ENCODE measurements at regions of chr16 and their contacts with region 1.

Region 1: GRCh38 chr16:19886073-19886941 is 1.7 kb upstream of the GPRC5B start:
- DNase-seq: peak; percentile 88
- ATAC-seq: peak; percentile 68
- H3K4me3 ChIP-seq: peak overlapping the region in 1 of 2 experiments; percentile 78; a peak in 2 of 4 replicates
- H3K27ac ChIP-seq: peak overlapping the region; percentile 12; the same call in 1 of the 2 replicates
- H3K4me1 ChIP-seq: peaks cover 23% of the 10 kb centered on the region
- H3K27me3 ChIP-seq: no peaks in the 10 kb centered on the region
- CTCF ChIP-seq: peak; percentile 100

Region 2: DNA sequence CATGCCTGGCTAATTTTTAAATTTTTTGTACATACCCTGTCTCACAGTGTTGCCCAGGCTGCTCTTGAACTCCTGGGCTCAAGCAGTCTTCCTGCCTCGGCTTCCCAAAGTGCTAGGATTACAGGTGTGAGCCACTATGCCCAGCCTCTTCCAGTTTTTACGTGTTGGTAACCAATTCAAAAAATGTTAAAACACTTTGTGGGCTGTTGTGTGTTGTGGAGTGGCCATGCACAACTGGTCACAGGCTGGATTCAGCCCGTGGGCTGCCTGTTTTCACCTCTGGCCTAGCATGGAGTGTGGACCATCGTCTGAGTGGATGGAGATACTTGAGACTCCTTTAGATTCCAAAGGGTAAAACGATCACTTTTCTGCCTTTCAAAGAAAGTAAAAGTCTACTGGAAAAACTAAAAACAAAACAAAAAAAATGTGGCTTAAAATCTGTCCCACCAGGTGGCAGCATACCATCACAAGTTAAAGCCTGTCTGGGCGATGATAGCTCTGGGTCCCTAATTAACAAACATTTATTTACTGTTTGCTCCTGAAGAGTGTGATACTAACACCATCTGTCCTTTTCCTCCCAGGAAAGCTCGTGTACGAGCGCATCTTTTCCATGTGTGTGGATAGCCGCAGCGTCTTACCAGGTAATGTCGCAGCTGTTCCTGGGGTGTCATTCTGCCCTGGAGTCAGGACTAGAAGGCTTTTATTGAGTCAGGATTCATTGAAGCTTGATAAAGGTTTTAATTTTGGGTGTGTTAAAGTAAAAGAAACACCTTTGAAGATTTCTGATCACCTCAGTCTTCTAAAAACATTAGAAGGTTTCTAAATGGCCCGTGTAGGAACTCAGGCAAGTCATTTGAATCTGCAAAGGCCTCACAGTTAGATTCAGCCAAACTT is 285.0 kb before region 1 on chr16:
- CTCF ChIA-PET with region 1: interaction called, 6 read pairs
- POLR2A ChIA-PET with region 1: no interaction called
- in situ Hi-C with region 1: no loop called
- intact Hi-C with region 1: loop called (anchors 1 kb)
- DNase-seq: no peak
- ATAC-seq: peak; percentile 56; the same call in 1 of the 2 replicates
- H3K4me3 ChIP-seq: no peak overlapping the region
- H3K27ac ChIP-seq: no peak overlapping the region
- H3K4me1 ChIP-seq: no peaks in the 10 kb centered on the region
- H3K27me3 ChIP-seq: no peaks in the 10 kb centered on the region
- CTCF ChIP-seq: peak; percentile 85

Region 3: DNA sequence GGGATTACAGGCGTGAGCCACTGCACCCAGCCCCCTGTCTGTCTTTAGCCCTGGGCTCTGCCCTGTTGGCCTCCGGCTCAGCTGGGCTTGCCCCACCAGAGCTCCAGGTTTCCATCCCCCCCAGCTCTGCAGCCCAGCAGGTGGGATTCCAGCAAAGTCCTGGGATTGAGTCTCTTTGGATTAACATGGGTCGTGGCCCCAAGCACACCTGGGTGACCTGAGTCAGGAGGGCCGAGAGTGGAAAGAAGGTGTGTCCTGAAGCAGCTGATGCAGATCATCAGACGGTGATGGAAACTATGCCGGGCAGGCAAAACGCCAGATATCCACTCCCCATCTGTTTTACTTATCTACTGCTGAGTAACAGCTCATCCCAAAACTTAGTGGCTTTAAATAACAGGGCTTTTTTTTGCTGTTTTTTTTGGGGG is 240.7 kb before region 1 on chr16:
- CTCF ChIA-PET with region 1: no interaction called
- POLR2A ChIA-PET with region 1: no interaction called
- in situ Hi-C with region 1: loop called (anchors 25 kb)
- intact Hi-C with region 1: no loop called
- DNase-seq: no peak
- ATAC-seq: no peak
- H3K4me3 ChIP-seq: no peak overlapping the region
- H3K27ac ChIP-seq: no peak overlapping the region
- H3K4me1 ChIP-seq: no peaks in the 10 kb centered on the region
- H3K27me3 ChIP-seq: no peaks in the 10 kb centered on the region
- CTCF ChIP-seq: no peak

Region 4: GRCh38 chr16:19704321-19705145 is 181.8 kb before region 1 on chr16:
- CTCF ChIA-PET with region 1: no interaction called
- POLR2A ChIA-PET with region 1: no interaction called
- in situ Hi-C with region 1: no loop called
- intact Hi-C with region 1: loop called (anchors 5 kb)
- DNase-seq: no peak
- ATAC-seq: no peak
- H3K4me3 ChIP-seq: no peak overlapping the region
- H3K27ac ChIP-seq: no peak overlapping the region
- H3K4me1 ChIP-seq: peaks cover 8% of the 10 kb centered on the region
- H3K27me3 ChIP-seq: no peaks in the 10 kb centered on the region
- CTCF ChIP-seq: no peak

Measured in Panc1 (cell line).